Posterior cingulate gyrus (tissue), 11 donors: ENCODE measurements at regions of chr9 and their contacts with region 1.

Region 1: DNA sequence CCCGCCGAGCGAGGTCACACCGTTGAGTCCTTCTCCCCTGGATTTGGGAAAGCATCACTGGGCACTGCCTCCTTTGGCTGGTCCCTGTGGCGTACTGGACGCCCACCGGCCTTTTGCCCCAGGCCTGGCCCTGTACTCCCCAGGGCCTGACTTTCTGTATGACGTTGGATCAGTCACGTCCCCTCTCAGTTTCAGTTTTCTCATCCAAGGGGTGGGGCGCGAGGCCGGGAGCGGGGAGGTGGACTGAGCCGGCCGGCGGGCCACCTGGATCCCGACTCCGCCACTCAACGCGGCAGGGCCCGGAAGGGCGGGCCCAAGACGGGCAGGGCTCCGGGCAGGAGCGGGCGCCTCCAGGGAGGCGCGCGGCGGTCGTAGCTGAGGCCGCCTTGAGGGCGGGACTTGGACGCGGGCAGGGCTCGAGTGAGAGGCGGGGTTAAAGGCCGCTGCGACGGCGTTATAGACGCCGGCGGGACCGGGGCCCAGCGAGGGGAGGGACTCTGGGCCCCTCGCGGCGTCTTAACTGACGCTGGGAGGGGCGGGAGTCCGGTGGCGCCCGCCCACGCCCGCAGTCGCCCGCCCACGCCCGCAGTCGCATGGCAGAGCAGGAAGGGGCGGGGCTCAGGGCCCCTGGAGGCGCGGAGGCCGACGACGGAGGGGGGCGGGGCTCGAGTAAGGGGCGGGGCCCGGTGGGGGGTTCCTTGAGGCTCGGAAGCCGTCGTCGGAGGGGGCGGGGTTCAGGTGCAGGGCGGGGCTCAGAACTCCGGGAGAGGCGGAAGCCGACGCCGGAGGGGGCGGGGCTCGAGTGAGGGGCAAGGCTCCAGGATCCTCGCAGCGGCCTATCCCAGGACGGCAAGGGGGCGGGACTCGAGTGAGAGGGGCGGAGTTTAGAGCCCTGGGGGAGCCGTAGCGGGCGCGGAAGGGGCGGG is 549 bp upstream of the CARD19 start:
- DNase-seq: peak; percentile 99 to 100 (median 100)

Region 2: GRCh38 chr9:92877531-92878430 is 217.7 kb before region 1 on chr9 and contains the start of gene ZNF484:
- intact Hi-C with region 1: loop called (anchors 10 kb)
- DNase-seq: peak; percentile 92 to 99 (median 96)

Region 3: GRCh38 chr9:93134015-93134739 is 38.7 kb after region 1 on chr9 and contains the start of gene NINJ1:
- intact Hi-C with region 1: loop called (anchors 5 kb)
- DNase-seq: peak in 7 of 10 donors; percentile 44 to 93 (median 57)

Region 4: DNA sequence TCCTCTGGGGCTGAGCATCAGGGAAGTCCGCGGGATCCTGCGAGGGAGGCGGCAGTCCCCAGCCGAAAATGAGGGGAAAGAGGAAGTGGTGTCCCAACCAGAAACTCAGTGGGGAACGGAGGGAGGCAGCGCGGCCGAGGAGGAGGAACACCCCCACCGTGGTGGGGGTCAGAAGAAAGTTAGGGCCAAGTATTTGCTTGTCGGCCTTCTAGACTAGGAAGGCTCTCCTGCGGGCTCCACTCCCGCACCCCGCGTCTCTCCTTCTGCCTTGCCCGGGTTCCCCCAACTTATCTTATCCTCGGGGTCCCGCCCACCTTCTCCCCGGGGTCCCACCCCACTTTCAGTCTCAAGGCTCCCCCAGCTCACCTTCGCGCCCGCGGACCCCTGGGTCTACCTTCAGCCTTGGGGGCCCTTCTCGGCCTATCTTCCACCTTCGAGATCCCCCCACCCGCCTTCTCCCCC is 480.4 kb after region 1 on chr9:
- intact Hi-C with region 1: loop called (anchors 10 kb)
- DNase-seq: peak in 5 of 10 donors; percentile 28 to 87 (median 38)